Left cardiac atrium (tissue), 4 donors: ENCODE measurements at regions of chr1 and their contacts with region 1.

Region 1: GRCh38 chr1:116418091-116418830 is 45.2 kb downstream of the ATP1A1 start:
- DNase-seq: peak; percentile 88
- ATAC-seq: peak; percentile 90 to 91

Region 2: GRCh38 chr1:116377541-116378529 is 40.4 kb before region 1 on chr1:
- intact Hi-C with region 1: loop called in 1 of 2 experiments (anchors 5 kb)
- DNase-seq: peak; percentile 82
- ATAC-seq: peak; percentile 29 to 49

Region 3: DNA sequence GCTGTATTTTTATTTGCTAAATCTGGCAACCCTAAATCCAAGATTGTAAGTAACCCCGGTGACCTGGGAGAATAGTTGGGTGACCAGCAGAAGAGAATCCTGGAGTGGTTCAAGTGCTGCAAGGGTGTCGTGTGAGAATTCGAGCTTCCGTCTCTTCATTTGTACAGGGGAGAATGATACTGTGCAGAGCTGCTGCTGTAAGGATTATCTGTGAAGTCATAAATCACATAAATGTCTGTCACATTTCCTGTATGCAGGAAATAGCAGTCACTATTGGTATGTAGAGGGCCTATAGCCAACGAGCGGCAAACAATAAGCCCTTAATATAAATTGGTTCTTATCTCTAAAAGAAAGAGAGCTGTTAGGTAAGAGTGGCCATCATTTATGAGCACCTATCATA is 45.5 kb after region 1 on chr1:
- intact Hi-C with region 1: no loop called
- DNase-seq: no peak
- ATAC-seq: no peak